ENCODE measurements at regions of chr2 and their contacts with region 1.

Region 1: DNA sequence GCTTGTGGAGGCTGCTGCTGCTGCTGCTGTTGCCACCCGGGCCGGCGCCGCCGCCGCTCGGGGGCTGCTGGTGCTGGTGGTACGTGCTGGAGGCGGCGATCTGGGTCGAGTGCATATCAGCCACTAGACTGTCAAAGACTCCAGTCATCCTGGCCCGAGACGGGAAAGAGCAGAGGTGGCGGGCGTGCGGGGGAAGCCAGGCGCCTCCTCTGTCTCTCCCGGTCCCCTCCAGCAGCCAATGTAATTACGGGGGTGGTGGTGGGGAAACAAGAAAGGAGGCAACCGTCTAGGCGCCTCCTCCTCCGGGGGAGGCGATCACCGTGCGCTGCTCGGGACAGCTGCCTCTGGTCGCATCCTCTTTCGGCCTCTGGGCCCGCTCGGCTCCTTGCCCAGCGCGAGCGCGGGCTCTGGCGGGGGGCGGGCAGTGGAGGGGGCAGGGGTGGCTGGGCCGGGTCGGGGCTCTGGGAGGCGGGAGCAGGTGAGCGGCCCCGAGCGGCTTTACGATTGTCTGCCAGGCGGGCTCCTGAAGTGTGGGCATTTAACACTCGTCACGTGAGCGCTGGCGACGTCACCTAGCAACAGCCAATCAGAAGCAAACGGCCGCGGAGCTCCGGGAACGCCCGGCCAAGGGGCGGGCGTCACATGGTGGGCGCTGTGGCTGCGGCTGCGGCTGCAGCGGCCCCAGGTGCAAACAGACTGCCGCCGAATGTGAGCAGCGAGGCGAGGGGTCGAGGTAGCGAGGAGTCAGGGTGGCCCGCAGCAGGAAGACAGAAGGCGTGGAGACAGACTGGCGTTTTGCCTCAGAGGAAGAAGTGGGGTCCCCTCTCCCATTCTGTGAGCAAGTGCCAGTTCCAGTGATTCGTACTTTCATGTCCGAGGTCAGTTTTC is at the start of gene DLX2:
- DNase-seq: peak; percentile 63 to 73
- ATAC-seq: peak; percentile 56 to 85 (median 68)
- H3K4me3 ChIP-seq: peak within 1 kb of the TSS; percentile 31 to 66 (median 52)
- H3K27ac ChIP-seq: no peak within 1 kb of the TSS
- H3K4me1 ChIP-seq: peaks cover 18 to 77% (median 60%) of the 10 kb centered on the region in 9 donors
- H3K27me3 ChIP-seq: peaks cover 83 to 100% (median 100%) of the 10 kb centered on the region in 7 donors
- CTCF ChIP-seq: peak in 1 of 9 donors; percentile 6
- total RNA-seq, gene DLX2: 0.11 TPM in 1 of 10 donors, not detected in the others

Region 2: DNA sequence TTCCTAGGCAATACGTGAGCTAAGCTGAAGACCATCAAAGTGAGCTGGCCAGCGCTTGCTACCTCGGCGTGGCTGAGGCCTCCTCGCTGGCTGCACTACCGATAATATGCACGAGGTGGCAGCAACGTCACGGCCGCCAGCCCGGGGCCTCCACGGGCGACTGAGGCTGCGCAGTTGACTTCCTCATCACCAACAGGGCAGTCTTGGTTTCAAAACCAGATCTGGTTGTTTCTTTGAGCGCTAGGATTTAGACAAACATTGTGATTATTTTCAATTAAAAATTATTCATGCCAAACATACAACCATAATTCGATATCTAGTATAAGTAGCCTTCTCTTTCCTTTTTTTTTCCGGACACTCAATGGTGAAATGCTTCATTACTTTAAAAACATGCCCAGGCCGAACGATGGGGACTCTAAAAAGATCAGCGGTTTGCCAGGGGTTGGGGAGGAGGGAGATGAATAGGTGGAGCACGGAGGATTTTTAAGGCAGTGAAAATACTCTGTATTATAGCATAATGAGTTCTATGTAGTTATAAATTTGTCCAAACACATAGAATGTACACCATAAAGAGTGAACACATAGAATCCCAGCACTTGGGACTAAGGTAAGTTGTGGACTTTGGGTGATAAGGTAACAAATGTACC is 528.4 kb before region 1 on chr2:
- intact Hi-C with region 1: loop called in 3 of 10 experiments (anchors 10 kb)
- DNase-seq: peak; percentile 72 to 83
- ATAC-seq: peak; percentile 92 to 98 (median 96)
- H3K4me3 ChIP-seq: peak overlapping the region in 2 of 10 donors; percentile 12 to 16
- H3K27ac ChIP-seq: no peak overlapping the region
- H3K4me1 ChIP-seq: peaks cover 0 to 3% (median 0%) of the 10 kb centered on the region in 9 donors
- H3K27me3 ChIP-seq: peaks cover 0 to 11% (median 0%) of the 10 kb centered on the region in 7 donors
- CTCF ChIP-seq: peak; percentile 89 to 99 (median 98)

Region 3: GRCh38 chr2:171598713-171599319 is 503.8 kb before region 1 on chr2:
- intact Hi-C with region 1: loop called in 2 of 10 experiments (anchors 5 to 10 kb)
- DNase-seq: peak in 1 of 2 donors; percentile 34
- ATAC-seq: peak in 7 of 8 donors; percentile 55 to 84 (median 67)
- H3K4me3 ChIP-seq: no peak overlapping the region
- H3K27ac ChIP-seq: no peak overlapping the region
- H3K4me1 ChIP-seq: peaks cover 0 to 4% (median 0%) of the 10 kb centered on the region in 9 donors
- H3K27me3 ChIP-seq: peaks cover 0 to 33% (median 6%) of the 10 kb centered on the region in 7 donors
- CTCF ChIP-seq: peak; percentile 49 to 81 (median 73)

Region 4: GRCh38 chr2:171703574-171704347 is 398.9 kb before region 1 on chr2:
- intact Hi-C with region 1: loop called in 8 of 10 experiments (anchors 1 to 10 kb)
- DNase-seq: no peak
- ATAC-seq: peak in 7 of 8 donors; percentile 28 to 73 (median 59)
- H3K4me3 ChIP-seq: no peak overlapping the region
- H3K27ac ChIP-seq: peak overlapping the region in 7 of 10 donors; percentile 4 to 68 (median 57)
- H3K4me1 ChIP-seq: peaks cover 4 to 52% (median 24%) of the 10 kb centered on the region in 9 donors
- H3K27me3 ChIP-seq: no peaks in the 10 kb centered on the region
- CTCF ChIP-seq: peak; percentile 19 to 61 (median 51)

Region 5: GRCh38 chr2:171811245-171811628 is 291.4 kb before region 1 on chr2:
- intact Hi-C with region 1: loop called in 9 of 10 experiments (anchors 2 to 10 kb)
- DNase-seq: no peak
- ATAC-seq: peak in 2 of 8 donors; percentile 13 to 49
- H3K4me3 ChIP-seq: no peak overlapping the region
- H3K27ac ChIP-seq: no peak overlapping the region
- H3K4me1 ChIP-seq: peaks cover 0 to 8% (median 0%) of the 10 kb centered on the region in 9 donors
- H3K27me3 ChIP-seq: no peaks in the 10 kb centered on the region
- CTCF ChIP-seq: peak in 7 of 9 donors; percentile 6 to 58 (median 43)

Region 6: GRCh38 chr2:171922230-171923022 is 180.2 kb before region 1 on chr2 and contains the start of gene HAT1:
- intact Hi-C with region 1: loop called in 1 of 10 experiments (anchors 10 kb)
- DNase-seq: peak; percentile 95 to 97
- ATAC-seq: peak; percentile 99 to 100 (median 100)
- H3K4me3 ChIP-seq: peak within 1 kb of the TSS; percentile 68 to 94 (median 86)
- H3K27ac ChIP-seq: peak within 1 kb of the TSS; percentile 72 to 95 (median 92)
- H3K4me1 ChIP-seq: peaks cover 7 to 34% (median 24%) of the 10 kb centered on the region in 9 donors
- H3K27me3 ChIP-seq: no peaks in the 10 kb centered on the region
- CTCF ChIP-seq: no peak
- total RNA-seq, gene HAT1: 25.0 to 45.5 (median 36.6) TPM

Region 7: DNA sequence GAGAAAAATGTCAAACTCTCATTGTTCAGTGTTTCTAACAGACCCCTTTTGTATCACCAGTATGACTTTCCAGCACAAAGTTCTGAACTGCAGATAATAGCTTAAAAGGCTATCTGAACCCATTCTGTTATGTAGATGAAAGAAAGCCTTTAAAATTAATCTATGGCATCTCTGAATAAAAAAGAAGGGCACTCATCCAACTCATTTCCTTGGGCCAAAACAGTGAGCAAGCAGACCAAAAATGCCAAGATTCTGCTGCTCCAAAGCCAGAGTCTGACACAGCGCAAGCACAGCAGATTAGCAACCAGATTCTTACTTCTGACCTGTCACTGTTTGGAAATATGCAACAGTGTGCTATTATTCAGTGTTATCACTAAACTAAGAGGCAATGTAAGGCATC is 302.2 kb after region 1 on chr2:
- intact Hi-C with region 1: no loop called
- DNase-seq: no peak
- ATAC-seq: peak in 6 of 8 donors; percentile 14 to 53 (median 29)
- H3K4me3 ChIP-seq: no peak overlapping the region
- H3K27ac ChIP-seq: peak overlapping the region in 7 of 10 donors; percentile 37 to 64 (median 53)
- H3K4me1 ChIP-seq: peaks cover 0 to 52% (median 15%) of the 10 kb centered on the region in 9 donors
- H3K27me3 ChIP-seq: no peaks in the 10 kb centered on the region
- CTCF ChIP-seq: no peak

Region 8: GRCh38 chr2:172878260-172878659 is 775.6 kb after region 1 on chr2:
- intact Hi-C with region 1: no loop called
- DNase-seq: no peak
- ATAC-seq: no peak
- H3K4me3 ChIP-seq: no peak overlapping the region
- H3K27ac ChIP-seq: no peak overlapping the region
- H3K4me1 ChIP-seq: peaks cover 0 to 9% (median 0%) of the 10 kb centered on the region in 9 donors
- H3K27me3 ChIP-seq: no peaks in the 10 kb centered on the region
- CTCF ChIP-seq: no peak

Measured in heart right ventricle (tissue), 16 donors.